ENCODE measurements at regions of chr6 and their contacts with region 1.

Region 1: DNA sequence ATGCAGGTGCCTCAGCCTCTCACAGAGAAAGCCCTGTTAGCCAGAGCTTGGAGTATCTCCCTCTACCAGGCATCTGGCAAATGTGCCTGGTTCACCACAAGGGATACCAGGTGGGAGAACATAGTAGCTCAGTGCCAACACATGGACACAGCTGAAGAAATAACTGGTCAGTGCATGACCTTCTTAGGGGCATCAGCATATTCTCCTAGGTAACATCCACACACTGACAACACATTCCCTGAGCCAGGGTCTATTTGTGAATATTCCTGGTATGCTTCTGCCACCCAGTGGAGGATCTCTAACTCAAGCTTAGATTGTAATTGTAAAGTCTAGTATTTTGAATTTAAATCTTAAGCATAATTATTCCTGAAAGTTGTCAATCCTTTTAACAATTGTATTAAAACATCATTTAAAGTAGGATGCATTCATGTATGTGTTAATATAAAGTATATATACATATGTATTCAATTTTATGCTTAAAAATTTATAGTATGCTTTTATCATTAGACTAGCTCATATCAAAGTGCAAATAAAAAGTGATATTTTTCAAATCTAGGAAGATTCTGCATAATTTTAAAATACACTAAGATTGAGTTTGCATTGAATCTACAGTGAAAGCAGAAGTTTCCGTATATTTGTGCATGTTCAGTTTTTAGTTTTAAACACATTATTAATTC is 45.3 kb upstream of the COL21A1 start:
- DNase-seq: peak; percentile 39 to 74 (median 68)
- H3K4me3 ChIP-seq: no peak overlapping the region
- H3K27ac ChIP-seq: no peak overlapping the region
- H3K4me1 ChIP-seq: no peaks in the 10 kb centered on the region
- H3K27me3 ChIP-seq: no peaks in the 10 kb centered on the region

Region 2: DNA sequence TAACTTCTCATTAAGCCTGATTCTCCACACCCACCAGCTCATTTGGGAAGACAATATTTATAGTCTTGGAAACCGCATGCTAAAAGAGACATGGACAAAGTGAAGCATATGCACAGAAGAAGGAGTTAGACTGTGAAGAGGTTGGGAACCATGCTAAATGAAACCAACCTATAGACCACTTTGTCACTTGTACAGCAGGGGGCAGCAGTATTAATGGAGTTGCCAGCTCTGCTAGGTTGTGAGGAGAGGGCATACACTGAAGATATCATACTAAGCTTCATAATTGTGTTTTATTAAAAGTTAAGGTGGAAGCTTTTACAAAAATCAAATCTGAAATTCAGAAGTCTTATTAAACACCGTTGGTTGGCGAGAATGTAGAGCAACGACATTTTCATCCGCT is 675.4 kb before region 1 on chr6:
- CTCF ChIA-PET with region 1: interaction called, 11 read pairs
- POLR2A ChIA-PET with region 1: no interaction called
- DNase-seq: peak in 2 of 3 donors; percentile 3 to 5
- H3K4me3 ChIP-seq: no peak overlapping the region
- H3K27ac ChIP-seq: no peak overlapping the region
- H3K4me1 ChIP-seq: no peaks in the 10 kb centered on the region
- H3K27me3 ChIP-seq: peaks cover 0 to 3% (median 0%) of the 10 kb centered on the region in 5 experiments

Region 3: GRCh38 chr6:55980627-55981211 is 311.9 kb before region 1 on chr6:
- CTCF ChIA-PET with region 1: interaction called, 46 read pairs
- POLR2A ChIA-PET with region 1: no interaction called
- DNase-seq: peak; percentile 29 to 58 (median 47)
- H3K4me3 ChIP-seq: no peak overlapping the region
- H3K27ac ChIP-seq: no peak overlapping the region
- H3K4me1 ChIP-seq: no peaks in the 10 kb centered on the region
- H3K27me3 ChIP-seq: peaks cover 0 to 2% (median 0%) of the 10 kb centered on the region in 5 experiments

Region 4: DNA sequence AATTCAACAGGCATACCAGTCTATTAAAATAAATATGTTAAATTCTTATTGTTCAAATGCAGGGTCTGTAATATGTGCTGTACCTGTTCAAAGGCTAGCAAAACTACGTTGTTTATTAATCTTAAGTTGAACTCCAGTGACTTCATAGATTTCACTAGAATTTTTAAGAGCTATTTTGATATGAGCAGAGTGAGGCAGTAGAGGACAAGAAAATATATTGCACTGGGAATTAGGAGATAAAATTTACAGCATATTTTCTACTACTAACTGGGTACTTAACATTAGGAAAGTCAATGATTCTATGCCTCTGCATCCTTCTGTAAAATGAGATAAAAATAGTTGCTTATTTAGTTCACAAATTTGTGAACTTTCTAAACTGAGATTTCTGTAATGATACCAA is 255.0 kb before region 1 on chr6:
- CTCF ChIA-PET with region 1: no interaction called
- POLR2A ChIA-PET with region 1: no interaction called
- DNase-seq: no peak
- H3K4me3 ChIP-seq: no peak overlapping the region
- H3K27ac ChIP-seq: no peak overlapping the region
- H3K4me1 ChIP-seq: no peaks in the 10 kb centered on the region
- H3K27me3 ChIP-seq: peaks cover 0 to 7% (median 0%) of the 10 kb centered on the region in 5 experiments

Region 5: GRCh38 chr6:56370561-56371211 is 78.0 kb after region 1 on chr6:
- CTCF ChIA-PET with region 1: no interaction called
- POLR2A ChIA-PET with region 1: no interaction called
- DNase-seq: peak; percentile 23 to 78 (median 41)
- H3K4me3 ChIP-seq: no peak overlapping the region
- H3K27ac ChIP-seq: no peak overlapping the region
- H3K4me1 ChIP-seq: peaks cover 0 to 19% (median 9%) of the 10 kb centered on the region in 4 experiments
- H3K27me3 ChIP-seq: no peaks in the 10 kb centered on the region

Measured in common myeloid progenitor, CD34-positive (primary cell).